ENCODE measurements at regions of chr3 and their contacts with region 1.

Region 1: GRCh38 chr3:12891985-12892839 is 50.8 kb upstream of the RPL32 start:
- DNase-seq: peak; percentile 51
- ATAC-seq: peak; percentile 20
- H3K4me3 ChIP-seq: peak overlapping the region in 1 of 3 experiments; percentile 56; a peak in 2 of 6 replicates
- H3K27ac ChIP-seq: no peak overlapping the region
- H3K4me1 ChIP-seq: peaks cover 47% of the 10 kb centered on the region
- H3K27me3 ChIP-seq: peaks cover 0 to 11% of the 10 kb centered on the region in 2 experiments; a peak in 2 of 5 replicates
- CTCF ChIP-seq: peak; percentile 88
- EP300 ChIP-seq: no peak
- POLR2A ChIP-seq: no peak
- RAD21 ChIP-seq: peak; percentile 89

Region 2: DNA sequence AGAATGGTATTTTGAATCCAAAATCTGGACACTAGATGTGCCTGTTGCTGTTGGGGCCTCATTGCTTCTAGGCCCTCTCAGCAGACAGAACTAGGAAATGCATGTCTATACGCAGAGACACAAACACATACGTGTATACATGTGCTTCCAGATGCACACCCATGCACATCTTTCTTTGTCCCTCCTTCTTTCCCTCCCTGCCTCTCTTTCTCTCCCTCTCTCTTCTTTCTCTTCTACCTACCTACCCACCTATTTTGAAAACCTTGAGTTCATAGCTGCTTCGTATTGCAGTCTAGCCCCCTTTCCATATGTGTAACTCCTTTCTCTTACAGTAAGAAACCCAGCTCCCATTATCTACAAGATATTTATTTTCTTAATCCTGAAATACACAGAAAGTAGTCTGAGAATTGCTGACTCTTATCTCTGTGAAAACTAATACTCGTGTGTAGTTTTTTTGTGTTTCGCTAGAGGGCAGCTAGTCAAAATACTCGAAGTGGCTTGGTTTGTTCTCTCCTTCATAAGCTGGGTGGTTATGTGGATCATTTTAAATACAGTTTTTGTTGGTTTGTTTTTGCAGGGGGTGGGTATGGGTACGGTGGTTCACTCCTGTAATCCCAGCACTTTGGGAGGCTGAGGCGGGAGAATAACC is 69.4 kb before region 1 on chr3:
- CTCF ChIA-PET with region 1: interaction called, 5 read pairs
- POLR2A ChIA-PET with region 1: no interaction called
- in situ Hi-C with region 1: no loop called
- intact Hi-C with region 1: loop called (anchors 2 kb)
- DNase-seq: peak; percentile 29
- ATAC-seq: peak; percentile 57; the same call in 2 of the 3 replicates
- H3K4me3 ChIP-seq: no peak overlapping the region
- H3K27ac ChIP-seq: no peak overlapping the region
- H3K4me1 ChIP-seq: peaks cover 13% of the 10 kb centered on the region; the same call in 1 of the 2 replicates
- H3K27me3 ChIP-seq: peaks cover 1 to 24% of the 10 kb centered on the region in 2 experiments; a peak in 3 of 5 replicates
- CTCF ChIP-seq: peak; percentile 44; the same call in 1 of the 2 replicates
- EP300 ChIP-seq: no peak
- POLR2A ChIP-seq: no peak
- RAD21 ChIP-seq: no peak

Region 3: DNA sequence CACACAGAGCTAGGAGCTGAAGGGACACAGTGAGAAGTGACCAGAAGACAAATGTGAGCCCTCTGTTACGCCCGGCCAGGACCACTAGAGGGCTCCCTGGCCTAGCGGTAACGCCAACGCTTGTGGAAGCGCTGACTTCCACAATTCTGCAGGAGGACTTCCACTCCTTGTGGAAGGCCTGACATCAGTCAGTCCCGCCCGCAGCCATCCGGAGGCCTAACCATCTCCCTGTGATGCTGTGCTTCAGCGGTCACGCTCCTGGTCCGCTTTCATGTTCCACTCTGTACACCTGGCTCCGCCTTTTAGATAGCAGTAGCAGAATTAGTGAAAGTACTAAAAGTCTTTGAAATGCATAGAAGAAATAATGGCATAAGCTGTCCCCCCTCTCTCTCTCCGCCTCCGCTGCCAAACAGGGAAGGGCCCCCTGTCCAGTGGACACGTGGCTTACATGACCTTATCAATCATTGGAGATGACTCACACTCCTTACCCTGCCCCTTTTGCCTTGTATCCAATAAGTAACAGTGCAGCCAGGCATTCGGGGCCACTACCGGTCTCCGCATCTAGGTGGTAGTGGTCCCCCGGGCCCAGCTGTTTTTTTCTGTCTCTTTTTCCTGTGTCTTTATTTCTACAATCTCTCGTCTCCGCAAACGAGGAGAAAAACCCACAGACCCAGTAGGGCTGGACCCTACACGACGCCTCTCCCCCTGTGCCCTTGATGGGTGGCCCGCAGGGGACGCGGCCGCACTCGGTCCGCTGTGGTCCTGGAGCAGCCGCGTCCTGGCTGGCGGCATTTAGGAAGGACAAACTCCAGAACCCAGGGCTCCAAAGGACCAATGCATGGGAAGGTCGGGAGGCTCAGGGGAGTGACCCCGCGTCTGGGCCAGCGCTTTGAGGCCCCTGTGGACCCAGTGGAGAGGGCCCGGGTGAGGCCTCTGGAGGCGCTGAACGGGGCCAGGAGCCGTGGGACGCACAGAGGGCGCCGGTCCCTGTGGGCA is 23.9 kb before region 1 on chr3:
- CTCF ChIA-PET with region 1: interaction called, 39 read pairs
- POLR2A ChIA-PET with region 1: interaction called, 3 read pairs
- in situ Hi-C with region 1: no loop called
- intact Hi-C with region 1: loop called (anchors 1 kb)
- DNase-seq: peak; percentile 77
- ATAC-seq: peak; percentile 89
- H3K4me3 ChIP-seq: peak overlapping the region in 1 of 3 experiments; percentile 23; a peak in 2 of 6 replicates
- H3K27ac ChIP-seq: no peak overlapping the region
- H3K4me1 ChIP-seq: no peaks in the 10 kb centered on the region; the same call in 1 of the 2 replicates
- H3K27me3 ChIP-seq: peaks cover 2 to 62% of the 10 kb centered on the region in 2 experiments
- CTCF ChIP-seq: peak; percentile 95
- EP300 ChIP-seq: no peak
- POLR2A ChIP-seq: no peak
- RAD21 ChIP-seq: peak; percentile 91

Region 4: GRCh38 chr3:13088028-13089006 is 196.1 kb after region 1 on chr3:
- CTCF ChIA-PET with region 1: no interaction called
- POLR2A ChIA-PET with region 1: no interaction called
- in situ Hi-C with region 1: no loop called
- intact Hi-C with region 1: no loop called
- DNase-seq: no peak
- ATAC-seq: no peak
- H3K4me3 ChIP-seq: no peak overlapping the region
- H3K27ac ChIP-seq: no peak overlapping the region
- H3K4me1 ChIP-seq: peaks cover 17% of the 10 kb centered on the region
- H3K27me3 ChIP-seq: no peaks in the 10 kb centered on the region
- CTCF ChIP-seq: no peak
- EP300 ChIP-seq: no peak
- POLR2A ChIP-seq: no peak
- RAD21 ChIP-seq: no peak

Measured in HepG2 (cell line).